Breast epithelium (tissue), 4 donors: ENCODE measurements at regions of chr15 and their contacts with region 1.

Region 1: DNA sequence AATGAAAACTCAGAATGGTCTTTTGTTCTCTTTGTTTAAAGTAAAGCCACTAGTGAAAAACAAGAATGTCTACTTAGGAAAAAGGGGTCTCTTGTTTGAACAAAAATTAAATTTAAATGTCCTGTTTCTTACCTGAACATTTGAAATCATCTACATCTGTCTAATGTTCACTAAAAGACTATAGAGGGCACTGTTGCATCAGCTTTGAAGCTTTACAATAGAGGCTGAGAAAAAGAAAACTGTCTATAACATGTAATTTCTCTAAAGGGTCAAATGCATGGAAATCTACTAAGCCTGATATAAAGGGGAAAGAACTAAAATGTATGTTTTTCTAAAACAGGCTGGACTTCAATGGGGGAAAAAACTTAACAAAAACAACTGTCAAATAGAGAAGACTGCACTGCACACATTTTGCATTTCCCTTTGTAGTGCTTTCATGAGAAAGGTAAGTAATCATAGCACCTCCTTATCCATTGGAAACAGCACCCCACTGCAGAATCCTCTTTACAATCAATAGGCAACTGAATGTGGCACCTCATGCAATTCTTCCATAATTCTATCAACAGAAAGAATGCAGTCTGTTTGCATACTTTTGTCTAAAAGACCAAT is 26.3 kb downstream of the DPH6 start:
- DNase-seq: no peak
- H3K4me3 ChIP-seq: no peak overlapping the region
- H3K27ac ChIP-seq: no peak overlapping the region
- H3K4me1 ChIP-seq: no peaks in the 10 kb centered on the region
- H3K27me3 ChIP-seq: no peaks in the 10 kb centered on the region
- CTCF ChIP-seq: peak in 2 of 3 donors; percentile 44 to 62
- POLR2A ChIP-seq: no peak

Region 2: DNA sequence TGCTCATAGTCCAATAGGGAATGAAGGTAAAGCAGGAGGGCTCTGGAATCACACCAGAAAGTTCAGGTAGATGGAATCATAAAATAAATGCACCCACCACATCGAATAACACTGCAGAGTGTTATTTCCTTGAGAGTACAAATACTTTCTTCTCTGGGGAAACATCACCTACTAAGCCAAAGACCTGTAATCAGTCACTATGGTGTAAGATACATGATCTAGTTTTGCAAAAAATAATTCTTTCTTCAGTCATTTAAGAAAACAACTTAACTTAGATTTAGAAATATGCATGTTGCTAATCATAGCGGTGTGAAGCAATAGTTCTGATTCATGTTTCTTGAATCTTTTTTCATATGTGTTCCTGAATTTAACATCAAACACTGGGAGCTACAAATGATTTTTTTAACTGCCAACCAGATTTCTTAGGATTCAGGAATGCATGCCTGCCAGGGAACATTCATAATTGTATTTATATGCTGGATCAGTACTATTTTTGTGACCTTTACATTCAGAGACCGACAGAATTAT is 1621.0 kb after region 1 on chr15:
- intact Hi-C with region 1: loop called (anchors 10 kb)
- DNase-seq: no peak
- H3K4me3 ChIP-seq: no peak overlapping the region
- H3K27ac ChIP-seq: no peak overlapping the region
- H3K4me1 ChIP-seq: no peaks in the 10 kb centered on the region
- H3K27me3 ChIP-seq: no peaks in the 10 kb centered on the region
- CTCF ChIP-seq: no peak
- POLR2A ChIP-seq: no peak